PC-9 (cell line): ENCODE measurements at regions of chr15 and their contacts with region 1.

Region 1: DNA sequence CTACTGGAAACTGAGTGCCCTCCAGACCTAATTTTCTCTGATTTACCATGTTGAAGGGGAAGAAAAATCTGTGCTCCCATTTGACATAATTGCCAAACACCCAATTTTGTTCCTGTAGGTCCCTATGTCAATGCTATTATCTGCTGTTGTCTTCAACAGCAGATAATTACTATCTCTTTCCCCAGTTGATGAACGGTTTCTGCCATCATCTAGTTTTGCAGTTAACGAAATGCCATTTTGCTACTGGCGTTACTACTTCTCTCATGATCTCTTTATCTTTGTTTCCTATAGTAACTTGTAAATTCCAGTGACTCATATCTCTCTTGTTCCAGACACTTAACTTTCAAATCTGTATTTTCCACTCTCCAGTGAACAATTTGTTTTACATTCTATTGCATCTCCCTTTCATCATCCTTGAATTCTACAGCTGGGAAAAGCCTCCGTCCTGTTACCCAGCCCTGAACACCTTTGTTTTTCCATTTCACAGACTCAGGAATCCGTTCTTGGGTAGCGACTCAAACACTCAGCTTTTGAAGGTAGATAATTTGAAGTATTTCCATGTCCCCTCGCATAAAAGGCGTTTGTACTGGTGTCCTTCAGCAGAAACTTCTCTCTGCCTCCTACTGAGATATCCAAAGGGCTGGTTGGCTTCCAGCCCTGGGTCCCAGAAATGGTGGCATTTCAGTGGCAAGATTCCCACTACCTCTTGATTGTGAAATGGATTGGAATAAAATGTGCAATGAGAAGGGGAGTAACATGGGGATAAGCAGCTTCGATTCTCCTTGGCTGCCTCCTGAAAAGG is 111.7 kb downstream of the FOXB1 start:
- DNase-seq: peak in 1 of 2 experiments; percentile 48
- H3K4me3 ChIP-seq: no peak overlapping the region
- H3K27ac ChIP-seq: peak overlapping the region; percentile 64
- H3K4me1 ChIP-seq: peaks cover 20% of the 10 kb centered on the region
- H3K27me3 ChIP-seq: no peaks in the 10 kb centered on the region
- CTCF ChIP-seq: no peak

Region 2: DNA sequence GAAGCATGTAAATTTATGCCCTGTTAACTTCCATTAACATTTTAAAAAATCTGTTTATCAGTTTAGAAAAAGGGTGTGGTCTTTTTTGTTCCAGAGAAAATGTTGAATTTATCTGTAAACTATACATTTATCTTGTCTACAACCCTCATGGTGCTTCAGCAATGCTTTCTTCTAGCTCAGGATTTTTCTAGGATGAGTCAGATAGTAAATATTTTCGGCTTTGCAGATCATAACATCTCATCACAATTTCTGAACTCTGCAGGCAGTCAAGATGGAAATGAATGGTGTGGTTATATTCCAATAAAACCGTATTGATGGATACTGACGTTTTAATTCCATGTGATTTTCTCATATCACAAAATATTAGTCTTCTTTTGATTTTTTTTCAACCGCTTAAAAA is 182.2 kb before region 1 on chr15:
- CTCF ChIA-PET with region 1: no interaction called
- POLR2A ChIA-PET with region 1: interaction called, 11 read pairs
- intact Hi-C with region 1: no loop called
- DNase-seq: no peak
- H3K4me3 ChIP-seq: no peak overlapping the region
- H3K27ac ChIP-seq: no peak overlapping the region
- H3K4me1 ChIP-seq: peaks cover 11% of the 10 kb centered on the region
- H3K27me3 ChIP-seq: no peaks in the 10 kb centered on the region
- CTCF ChIP-seq: no peak

Region 3: DNA sequence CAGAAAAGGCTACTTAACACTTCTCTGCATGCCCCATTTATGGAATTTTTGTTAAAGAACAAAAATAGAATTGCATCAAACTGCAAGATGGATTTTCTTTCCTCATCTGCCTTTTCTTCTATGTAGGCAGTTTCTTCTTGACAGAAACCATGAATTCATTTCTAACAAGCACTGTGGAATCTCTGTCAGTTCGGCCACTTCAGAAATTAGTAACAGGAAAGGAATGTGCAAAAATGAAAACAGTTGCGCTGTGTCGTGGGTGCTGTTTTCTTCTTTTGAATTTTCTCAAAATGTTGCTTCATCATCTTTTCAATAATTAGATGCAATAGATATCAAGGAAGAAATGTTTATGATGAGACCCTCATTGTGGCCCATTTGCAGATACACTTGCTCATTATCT is 39.9 kb after region 1 on chr15:
- CTCF ChIA-PET with region 1: no interaction called
- POLR2A ChIA-PET with region 1: no interaction called
- intact Hi-C with region 1: no loop called
- DNase-seq: no peak
- H3K4me3 ChIP-seq: no peak overlapping the region
- H3K27ac ChIP-seq: no peak overlapping the region
- H3K4me1 ChIP-seq: no peaks in the 10 kb centered on the region
- H3K27me3 ChIP-seq: no peaks in the 10 kb centered on the region
- CTCF ChIP-seq: no peak